Activated B cell treated with CpG ODN at 0.5 μM for 24 hours (primary cell): ENCODE measurements at regions of chr5 and their contacts with region 1.

Region 1: DNA sequence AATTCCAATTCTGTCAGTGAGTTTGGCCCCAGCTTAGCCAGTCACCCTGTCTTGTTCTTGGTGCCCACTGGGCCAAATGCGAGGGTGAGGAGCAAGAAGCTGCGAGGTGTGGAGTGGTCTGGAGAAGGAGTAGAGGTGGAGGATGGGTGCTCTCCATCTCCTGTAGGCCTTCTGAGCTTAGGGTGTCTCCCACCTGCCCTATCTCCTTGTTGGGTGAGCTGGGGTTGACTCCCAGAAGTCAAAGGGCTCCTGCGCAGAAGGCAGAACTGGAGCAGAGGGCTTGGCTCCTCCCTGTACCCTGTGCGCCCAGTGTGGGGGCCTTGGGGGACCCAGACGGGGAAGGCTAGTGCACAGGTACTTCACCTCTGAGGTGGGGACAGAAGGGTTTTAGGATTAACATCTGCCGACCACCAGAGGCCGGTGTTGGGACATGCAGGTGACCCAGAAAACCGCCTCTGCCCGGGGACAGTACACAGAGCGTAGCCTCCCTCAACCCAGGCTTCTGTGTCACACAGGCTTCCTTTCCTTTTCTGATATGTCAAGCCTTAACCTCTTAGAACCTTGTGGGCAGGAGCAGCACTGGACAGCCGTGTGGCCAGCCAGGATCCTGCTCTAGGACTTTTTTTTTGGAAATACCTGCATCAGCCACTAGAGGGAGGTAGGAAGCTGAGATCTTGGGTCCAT is 16.9 kb downstream of the IL5 start:
- DNase-seq: peak; percentile 26
- ATAC-seq: peak; percentile 51
- H3K4me3 Mint-ChIP-seq: peak overlapping the region; percentile 25
- H3K27ac Mint-ChIP-seq: peak overlapping the region; percentile 27
- H3K4me1 Mint-ChIP-seq: peaks cover 53% of the 10 kb centered on the region
- H3K27me3 Mint-ChIP-seq: no peaks in the 10 kb centered on the region
- CTCF ChIP-seq: peak; percentile 69

Region 2: DNA sequence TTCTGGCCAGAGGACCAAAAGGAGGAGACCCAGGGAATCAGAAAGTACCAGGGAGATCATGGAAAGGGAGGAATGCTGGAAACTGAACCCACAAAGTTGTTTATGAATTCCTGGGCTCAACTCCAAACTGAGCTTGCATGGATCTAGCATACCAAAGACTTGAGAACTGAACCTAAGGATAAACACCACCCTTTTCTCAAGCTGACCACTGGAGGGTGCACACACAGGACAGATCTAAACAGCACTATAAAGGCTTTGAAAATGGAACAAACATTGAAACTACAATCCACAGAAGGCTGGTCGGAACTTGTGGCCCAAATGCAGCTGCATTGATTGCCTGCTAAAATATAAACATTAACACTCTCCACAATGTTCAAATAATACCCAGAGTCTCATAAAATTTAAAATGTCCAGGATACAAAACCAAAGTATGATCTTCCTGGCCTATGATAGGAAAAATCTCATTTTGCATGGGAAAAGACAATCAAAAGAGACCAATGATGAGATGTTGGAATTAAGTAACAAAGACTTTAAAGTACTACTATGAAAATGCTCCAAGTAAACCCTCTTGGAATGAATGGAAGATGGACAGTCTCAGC is 20.2 kb before region 1 on chr5:
- CTCF ChIA-PET with region 1: interaction called, 10 read pairs
- POLR2A ChIA-PET with region 1: no interaction called
- intact Hi-C with region 1: loop called (anchors 1 kb)
- DNase-seq: no peak
- ATAC-seq: peak; percentile 52
- H3K4me3 Mint-ChIP-seq: no peak overlapping the region
- H3K27ac Mint-ChIP-seq: no peak overlapping the region
- H3K4me1 Mint-ChIP-seq: peaks cover 7% of the 10 kb centered on the region
- H3K27me3 Mint-ChIP-seq: no peaks in the 10 kb centered on the region
- CTCF ChIP-seq: no peak

Region 3: DNA sequence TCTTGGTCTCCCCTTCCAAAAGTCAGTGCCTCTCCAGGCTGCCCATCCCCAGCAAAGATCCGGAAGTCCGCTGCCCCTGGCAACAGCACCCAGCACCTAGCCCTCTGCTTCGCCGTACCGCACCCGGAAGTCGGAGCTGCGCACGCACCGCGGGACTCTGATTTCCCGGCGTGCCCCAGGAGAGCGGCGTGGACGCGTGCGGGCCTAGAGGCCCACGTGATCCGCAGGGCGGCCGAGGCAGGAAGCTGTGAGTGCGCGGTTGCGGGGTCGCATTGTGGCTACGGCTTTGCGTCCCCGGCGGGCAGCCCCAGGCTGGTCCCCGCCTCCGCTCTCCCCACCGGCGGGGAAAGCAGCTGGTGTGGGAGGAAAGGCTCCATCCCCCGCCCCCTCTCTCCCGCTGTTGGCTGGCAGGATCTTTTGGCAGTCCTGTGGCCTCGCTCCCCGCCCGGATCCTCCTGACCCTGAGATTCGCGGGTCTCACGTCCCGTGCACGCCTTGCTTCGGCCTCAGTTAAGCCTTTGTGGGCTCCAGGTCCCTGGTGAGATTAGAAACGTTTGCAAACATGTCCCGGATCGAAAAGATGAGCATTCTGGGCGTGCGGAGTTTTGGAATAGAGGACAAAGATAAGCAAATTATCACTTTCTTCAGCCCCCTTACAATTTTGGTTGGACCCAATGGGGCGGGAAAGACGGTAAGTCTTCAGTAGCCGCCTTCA is 30.5 kb after region 1 on chr5 and contains the start of gene RAD50:
- CTCF ChIA-PET with region 1: interaction called, 3 read pairs
- POLR2A ChIA-PET with region 1: interaction called, 15 read pairs
- intact Hi-C with region 1: loop called (anchors 1 kb)
- DNase-seq: peak; percentile 89
- ATAC-seq: peak; percentile 97
- H3K4me3 Mint-ChIP-seq: peak within 1 kb of the TSS; percentile 97
- H3K27ac Mint-ChIP-seq: peak within 1 kb of the TSS; percentile 94
- H3K4me1 Mint-ChIP-seq: peaks cover 28% of the 10 kb centered on the region
- H3K27me3 Mint-ChIP-seq: no peaks in the 10 kb centered on the region
- CTCF ChIP-seq: no peak
- total RNA-seq, gene RAD50: 42.5 and 42.6 TPM in 2 replicates

Region 4: DNA sequence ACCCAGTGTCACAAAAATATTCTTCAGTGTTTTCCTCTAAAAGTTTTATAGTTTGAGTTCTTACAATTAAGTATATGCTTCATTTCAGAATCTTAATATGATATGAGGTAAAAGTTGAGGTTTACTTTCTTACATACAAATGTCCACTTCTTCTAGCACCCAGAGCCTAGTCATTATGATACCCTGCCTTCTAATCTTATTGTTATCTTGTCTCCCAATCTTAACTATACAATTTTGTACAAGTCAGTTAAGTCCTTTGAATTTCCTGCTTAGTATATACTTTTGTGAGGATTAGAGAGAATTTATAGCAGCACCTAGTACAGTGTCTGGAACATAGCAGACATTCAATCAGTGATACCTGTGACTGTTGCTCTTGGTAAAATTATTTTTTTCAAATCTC is 59.6 kb after region 1 on chr5:
- CTCF ChIA-PET with region 1: interaction called, 4 read pairs
- POLR2A ChIA-PET with region 1: no interaction called
- intact Hi-C with region 1: loop called (anchors 5 kb)
- DNase-seq: no peak
- ATAC-seq: no peak
- H3K4me3 Mint-ChIP-seq: no peak overlapping the region
- H3K27ac Mint-ChIP-seq: no peak overlapping the region
- H3K4me1 Mint-ChIP-seq: no peaks in the 10 kb centered on the region
- H3K27me3 Mint-ChIP-seq: no peaks in the 10 kb centered on the region
- CTCF ChIP-seq: no peak

Region 5: GRCh38 chr5:132714456-132715307 is 188.2 kb after region 1 on chr5:
- CTCF ChIA-PET with region 1: interaction called, 11 read pairs
- POLR2A ChIA-PET with region 1: no interaction called
- intact Hi-C with region 1: loop called (anchors 1 kb)
- DNase-seq: no peak
- ATAC-seq: no peak
- H3K4me3 Mint-ChIP-seq: no peak overlapping the region
- H3K27ac Mint-ChIP-seq: no peak overlapping the region
- H3K4me1 Mint-ChIP-seq: no peaks in the 10 kb centered on the region
- H3K27me3 Mint-ChIP-seq: no peaks in the 10 kb centered on the region
- CTCF ChIP-seq: no peak

Region 6: GRCh38 chr5:132736853-132737833 is 210.7 kb after region 1 on chr5 and contains the start of gene KIF3A:
- CTCF ChIA-PET with region 1: no interaction called
- POLR2A ChIA-PET with region 1: interaction called, 3 read pairs
- intact Hi-C with region 1: loop called (anchors 5 kb)
- DNase-seq: peak; percentile 98
- ATAC-seq: peak; percentile 92
- H3K4me3 Mint-ChIP-seq: peak within 1 kb of the TSS; percentile 90
- H3K27ac Mint-ChIP-seq: peak within 1 kb of the TSS; percentile 87
- H3K4me1 Mint-ChIP-seq: peaks cover 18% of the 10 kb centered on the region
- H3K27me3 Mint-ChIP-seq: peaks cover 5% of the 10 kb centered on the region
- CTCF ChIP-seq: no peak
- total RNA-seq, gene KIF3A: 9.2 and 9.8 TPM in 2 replicates